A549 (cell line): ENCODE measurements at regions of chr19 and their contacts with region 1.

Region 1: DNA sequence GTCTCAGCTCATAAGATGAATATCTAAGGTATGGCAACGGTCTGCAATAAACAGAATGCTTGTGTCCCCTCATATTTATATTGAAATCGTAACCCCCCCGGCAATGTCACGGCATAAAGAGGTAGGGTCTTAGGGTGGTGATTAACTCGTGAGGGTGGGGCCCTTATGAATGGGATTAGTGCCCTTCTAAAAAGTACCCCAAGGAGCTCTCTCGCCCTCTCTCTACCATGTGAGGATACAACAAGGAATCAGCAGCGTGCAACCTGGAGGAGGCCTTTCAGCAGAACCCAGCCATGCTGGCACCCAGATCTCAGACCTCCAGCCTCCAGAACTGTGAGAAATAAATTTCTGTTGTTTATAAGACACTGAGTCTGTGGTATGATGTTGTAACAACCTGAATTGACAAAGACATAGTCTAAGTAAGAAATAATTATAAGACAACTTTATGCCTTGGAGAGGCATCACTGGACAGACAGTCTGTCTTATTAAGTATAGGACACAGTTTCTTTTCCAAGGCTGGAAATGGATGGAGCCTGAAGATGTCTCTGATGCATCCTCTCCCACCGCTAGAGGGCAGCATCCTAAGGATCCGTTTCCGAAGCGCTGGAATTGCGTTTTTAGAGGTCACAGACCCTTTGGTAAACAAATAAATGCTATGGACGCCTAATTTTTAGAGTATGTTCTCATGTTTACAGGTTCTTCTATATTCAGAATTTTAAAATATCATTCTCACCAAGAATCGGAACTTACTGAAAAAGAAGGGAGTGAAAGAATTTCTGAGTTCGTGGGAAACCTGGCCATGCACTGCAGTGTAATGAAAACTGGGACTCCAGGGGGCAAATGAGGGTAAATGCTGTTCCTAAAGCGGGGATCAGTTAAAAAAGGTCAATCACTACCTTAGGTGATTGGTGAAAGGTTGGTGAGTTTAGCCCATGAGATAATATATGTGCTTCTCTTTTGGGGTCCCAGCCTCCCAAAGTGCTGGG is 13.3 kb upstream of the LEUTX start:
- DNase-seq: peak; percentile 41 to 82
- ATAC-seq: peak; percentile 55 to 77; a peak in 3 of 6 replicates
- H3K4me3 ChIP-seq: no peak overlapping the region
- H3K27ac ChIP-seq: no peak overlapping the region
- H3K4me1 ChIP-seq: no peaks in the 10 kb centered on the region
- CTCF ChIP-seq: peak; percentile 94
- EP300 ChIP-seq: no peak
- POLR2A ChIP-seq: no peak
- RAD21 ChIP-seq: peak; percentile 39 to 63; a peak in 3 of 5 replicates

Region 2: GRCh38 chr19:39745643-39746042 is 19.7 kb before region 1 on chr19:
- CTCF ChIA-PET with region 1: interaction called, 27 read pairs
- POLR2A ChIA-PET with region 1: no interaction called
- DNase-seq: no peak
- ATAC-seq: no peak
- H3K4me3 ChIP-seq: no peak overlapping the region
- H3K27ac ChIP-seq: no peak overlapping the region
- H3K4me1 ChIP-seq: no peaks in the 10 kb centered on the region
- CTCF ChIP-seq: no peak
- EP300 ChIP-seq: no peak
- POLR2A ChIP-seq: no peak
- RAD21 ChIP-seq: no peak

Region 3: DNA sequence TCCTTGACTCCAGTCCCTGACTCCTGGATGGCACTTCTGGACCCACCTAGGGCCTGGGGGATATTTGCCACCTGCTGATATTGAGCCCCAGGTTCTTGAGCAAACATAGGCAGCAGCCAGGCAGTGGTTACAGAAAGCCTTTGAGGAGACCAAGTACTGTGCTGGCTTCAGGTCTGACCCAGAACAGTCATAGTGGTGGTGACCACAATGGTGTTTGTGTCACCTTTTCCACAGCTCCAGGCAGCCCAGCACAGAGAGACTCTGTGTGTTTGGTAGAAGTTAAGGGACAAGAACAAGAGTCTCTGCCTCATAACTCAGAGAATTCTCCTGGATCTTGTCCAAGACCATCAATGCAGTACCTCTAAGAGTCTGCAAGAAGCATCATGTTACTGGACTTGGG is 13.0 kb before region 1 on chr19:
- CTCF ChIA-PET with region 1: interaction called, 46 read pairs
- POLR2A ChIA-PET with region 1: no interaction called
- DNase-seq: no peak
- ATAC-seq: no peak; a peak in 2 of 6 replicates
- H3K4me3 ChIP-seq: no peak overlapping the region
- H3K27ac ChIP-seq: no peak overlapping the region
- H3K4me1 ChIP-seq: no peaks in the 10 kb centered on the region
- CTCF ChIP-seq: no peak
- EP300 ChIP-seq: no peak
- POLR2A ChIP-seq: no peak
- RAD21 ChIP-seq: no peak

Region 4: DNA sequence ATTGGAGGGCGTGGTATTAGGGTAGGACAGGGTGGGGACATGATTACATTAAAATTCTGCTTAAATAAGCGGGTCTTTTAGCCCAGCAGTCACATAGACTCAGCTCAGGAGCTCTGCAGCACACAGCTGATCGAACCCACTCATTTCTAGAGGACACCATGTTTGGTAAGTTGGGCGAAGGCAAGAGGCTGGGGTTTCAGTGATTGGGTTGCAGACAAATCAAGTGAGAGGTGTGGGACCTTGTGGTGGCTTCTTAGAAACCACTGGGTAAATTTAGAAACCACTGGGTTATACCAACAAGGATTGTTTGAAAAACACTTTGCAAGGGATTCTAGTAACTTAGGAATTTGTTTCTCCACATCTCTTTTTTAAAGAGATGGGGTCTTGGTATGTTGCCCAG is 13.4 kb after region 1 on chr19 and contains the start of gene LEUTX:
- CTCF ChIA-PET with region 1: interaction called, 25 read pairs
- POLR2A ChIA-PET with region 1: no interaction called
- DNase-seq: no peak
- ATAC-seq: no peak
- H3K4me3 ChIP-seq: no peak within 1 kb of the TSS
- H3K27ac ChIP-seq: no peak within 1 kb of the TSS
- H3K4me1 ChIP-seq: no peaks in the 10 kb centered on the region
- CTCF ChIP-seq: no peak
- EP300 ChIP-seq: no peak
- POLR2A ChIP-seq: no peak
- RAD21 ChIP-seq: no peak
- polyA plus RNA-seq, gene LEUTX: not detected in 2 replicates